PC-3 (cell line): ENCODE measurements at regions of chr2 and their contacts with region 1.

Region 1: GRCh38 chr2:133146895-133147294 is 421.4 kb downstream of the NCKAP5 start:
- DNase-seq: peak; percentile 55
- ATAC-seq: peak; percentile 83
- H3K4me3 ChIP-seq: no peak overlapping the region
- H3K27ac ChIP-seq: no peak overlapping the region
- H3K4me1 ChIP-seq: peaks cover 12% of the 10 kb centered on the region; the same call in 1 of the 2 replicates
- H3K27me3 ChIP-seq: no peaks in the 10 kb centered on the region
- CTCF ChIP-seq: peak; percentile 57

Region 2: DNA sequence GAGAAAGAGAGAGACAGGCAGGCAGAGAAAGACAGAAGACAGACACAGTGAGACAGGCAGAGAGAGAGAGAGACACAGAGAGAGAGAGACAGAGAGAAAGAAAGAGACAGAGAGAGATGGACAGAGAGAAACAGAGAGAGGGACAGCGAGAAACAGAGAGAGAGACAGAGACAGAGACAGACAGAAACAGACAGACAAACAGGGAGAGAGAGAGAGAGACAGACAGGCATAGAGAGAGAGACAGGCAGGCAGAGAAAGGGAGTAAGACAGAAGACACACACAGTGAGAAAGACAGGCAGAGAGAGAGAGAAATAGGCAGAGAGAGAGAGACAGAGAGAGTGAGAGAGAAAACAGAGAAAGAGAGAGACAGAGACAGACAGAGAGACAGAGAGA is 879.8 kb before region 1 on chr2:
- CTCF ChIA-PET with region 1: no interaction called
- POLR2A ChIA-PET with region 1: interaction called, 3 read pairs
- intact Hi-C with region 1: loop called (anchors 10 kb)
- DNase-seq: no peak
- ATAC-seq: no peak
- H3K4me3 ChIP-seq: no peak overlapping the region
- H3K27ac ChIP-seq: no peak overlapping the region
- H3K4me1 ChIP-seq: peaks cover 8% of the 10 kb centered on the region; the same call in 1 of the 2 replicates
- H3K27me3 ChIP-seq: no peaks in the 10 kb centered on the region
- CTCF ChIP-seq: no peak

Region 3: GRCh38 chr2:132547074-132547687 is 599.7 kb before region 1 on chr2:
- CTCF ChIA-PET with region 1: interaction called, 8 read pairs
- POLR2A ChIA-PET with region 1: no interaction called
- intact Hi-C with region 1: loop called (anchors 2 kb)
- DNase-seq: peak; percentile 82
- ATAC-seq: peak; percentile 65
- H3K4me3 ChIP-seq: no peak overlapping the region
- H3K27ac ChIP-seq: no peak overlapping the region
- H3K4me1 ChIP-seq: peaks cover 14% of the 10 kb centered on the region
- H3K27me3 ChIP-seq: no peaks in the 10 kb centered on the region
- CTCF ChIP-seq: peak; percentile 85

Region 4: DNA sequence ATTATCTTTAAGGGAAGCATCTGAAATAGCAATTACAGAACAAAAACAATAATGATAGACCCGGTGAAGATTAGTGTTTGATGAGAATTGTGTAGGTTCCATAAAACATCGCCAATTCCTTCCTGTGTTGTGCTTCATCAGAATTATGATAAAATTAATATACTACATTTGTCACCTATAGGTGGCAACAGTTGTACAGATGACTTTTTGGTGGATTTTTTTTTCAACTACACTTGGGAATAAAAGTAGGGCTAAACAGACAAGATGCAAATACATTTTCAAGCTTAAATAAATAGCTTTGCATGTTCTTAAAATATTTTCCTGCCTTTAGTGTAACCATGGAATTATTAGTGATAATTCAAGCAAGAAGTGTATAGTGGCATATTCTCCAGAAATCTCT is 469.9 kb before region 1 on chr2:
- CTCF ChIA-PET with region 1: no interaction called
- POLR2A ChIA-PET with region 1: no interaction called
- intact Hi-C with region 1: loop called (anchors 1 kb)
- DNase-seq: peak; percentile 38
- ATAC-seq: peak; percentile 19; the same call in 1 of the 2 replicates
- H3K4me3 ChIP-seq: no peak overlapping the region
- H3K27ac ChIP-seq: peak overlapping the region; percentile 30
- H3K4me1 ChIP-seq: peaks cover 31% of the 10 kb centered on the region
- H3K27me3 ChIP-seq: no peaks in the 10 kb centered on the region
- CTCF ChIP-seq: peak; percentile 65

Region 5: GRCh38 chr2:132804051-132804450 is 342.8 kb before region 1 on chr2:
- CTCF ChIA-PET with region 1: no interaction called
- POLR2A ChIA-PET with region 1: no interaction called
- intact Hi-C with region 1: loop called (anchors 10 kb)
- DNase-seq: peak; percentile 82
- ATAC-seq: peak; percentile 100
- H3K4me3 ChIP-seq: no peak overlapping the region
- H3K27ac ChIP-seq: peak overlapping the region; percentile 17
- H3K4me1 ChIP-seq: peaks cover 15% of the 10 kb centered on the region
- H3K27me3 ChIP-seq: no peaks in the 10 kb centered on the region
- CTCF ChIP-seq: no peak